ENCODE measurements at regions of chr3 and their contacts with region 1.

Region 1: GRCh38 chr3:107690522-107691138 is 167.9 kb downstream of the BBX start:
- DNase-seq: no peak
- H3K4me3 ChIP-seq: no peak overlapping the region
- CTCF ChIP-seq: peak; percentile 23

Region 2: GRCh38 chr3:107542665-107543064 is 148.0 kb before region 1 on chr3:
- CTCF ChIA-PET with region 1: no interaction called
- POLR2A ChIA-PET with region 1: no interaction called
- DNase-seq: no peak
- H3K4me3 ChIP-seq: no peak overlapping the region
- CTCF ChIP-seq: no peak

Region 3: DNA sequence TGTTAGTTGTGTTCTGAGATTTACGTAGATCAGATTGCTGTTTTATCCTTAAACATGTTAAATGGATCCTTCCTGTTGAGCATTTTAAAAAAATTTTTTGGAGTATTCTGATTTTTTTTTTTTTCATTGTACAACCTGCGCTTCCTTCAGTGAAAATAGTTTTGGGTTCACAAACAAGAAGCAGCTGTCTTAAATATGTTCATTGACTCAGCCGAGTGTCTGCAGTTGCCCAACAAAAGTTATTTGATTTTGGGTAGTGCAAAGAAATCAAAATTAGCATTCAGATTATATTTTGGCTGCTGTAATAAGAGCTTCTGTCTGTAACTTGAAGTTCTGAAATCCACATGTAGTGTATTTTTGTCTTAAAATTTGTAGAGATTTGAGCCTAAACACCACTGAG is 19.6 kb before region 1 on chr3:
- CTCF ChIA-PET with region 1: interaction called, 172 read pairs
- POLR2A ChIA-PET with region 1: no interaction called
- DNase-seq: no peak
- H3K4me3 ChIP-seq: no peak overlapping the region
- CTCF ChIP-seq: no peak

Region 4: GRCh38 chr3:107676469-107677309 is 13.9 kb before region 1 on chr3:
- CTCF ChIA-PET with region 1: interaction called, 112 read pairs
- POLR2A ChIA-PET with region 1: no interaction called
- DNase-seq: no peak
- H3K4me3 ChIP-seq: no peak overlapping the region
- CTCF ChIP-seq: peak; percentile 29

Region 5: DNA sequence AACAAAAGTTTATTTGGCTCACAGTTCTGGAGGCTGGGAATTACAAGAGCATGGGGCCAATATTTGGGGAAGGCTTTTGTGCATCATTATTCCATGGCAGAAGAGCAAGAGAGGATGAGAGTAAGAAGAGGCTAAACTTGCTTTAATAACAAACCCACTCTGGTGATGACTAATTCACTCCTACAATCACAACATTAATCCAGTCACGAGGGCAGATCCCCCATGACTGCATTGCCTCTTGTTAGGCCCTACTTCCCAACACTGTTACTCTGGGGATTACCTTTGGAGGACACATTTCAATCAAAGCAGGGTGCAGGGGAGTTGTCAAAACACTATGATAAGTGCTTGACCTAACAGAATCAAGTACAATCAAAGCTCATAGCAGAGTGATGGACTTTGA is 13.8 kb after region 1 on chr3:
- CTCF ChIA-PET with region 1: interaction called, 25 read pairs
- POLR2A ChIA-PET with region 1: no interaction called
- DNase-seq: no peak
- H3K4me3 ChIP-seq: no peak overlapping the region
- CTCF ChIP-seq: no peak

Region 6: DNA sequence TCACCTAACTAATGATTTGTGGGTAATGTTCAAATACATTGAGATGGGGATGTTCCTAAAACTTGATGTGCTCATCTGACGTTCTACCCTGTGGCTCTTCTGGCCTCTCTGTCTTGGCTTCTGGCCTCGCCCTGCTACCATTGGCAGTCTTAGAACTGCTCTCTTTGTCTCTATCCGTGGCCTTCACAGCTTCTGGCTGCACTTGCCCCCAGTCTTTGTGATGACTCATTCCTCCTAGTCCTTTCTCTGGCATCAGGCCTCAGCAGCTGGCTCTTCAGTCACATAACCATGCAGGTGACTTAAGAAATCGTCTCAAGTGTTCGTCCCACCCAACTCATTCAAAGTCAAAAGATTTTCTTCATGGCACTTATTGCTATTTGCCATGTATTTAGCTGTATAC is 20.2 kb after region 1 on chr3:
- CTCF ChIA-PET with region 1: interaction called, 12 read pairs
- POLR2A ChIA-PET with region 1: no interaction called
- DNase-seq: no peak
- H3K4me3 ChIP-seq: no peak overlapping the region
- CTCF ChIP-seq: no peak

Region 7: GRCh38 chr3:107727102-107727501 is 36.5 kb after region 1 on chr3:
- CTCF ChIA-PET with region 1: interaction called, 30 read pairs
- POLR2A ChIA-PET with region 1: no interaction called
- DNase-seq: no peak
- H3K4me3 ChIP-seq: no peak overlapping the region
- CTCF ChIP-seq: no peak

Region 8: GRCh38 chr3:107740992-107741896 is 50.6 kb after region 1 on chr3:
- CTCF ChIA-PET with region 1: interaction called, 384 read pairs
- POLR2A ChIA-PET with region 1: no interaction called
- DNase-seq: no peak
- H3K4me3 ChIP-seq: no peak overlapping the region
- CTCF ChIP-seq: peak; percentile 13